ENCODE measurements at regions of chr9 and their contacts with region 1.

Region 1: GRCh38 chr9:95127249-95128176 is 190.0 kb downstream of the FANCC start:
- DNase-seq: peak; percentile 86
- H3K4me3 Mint-ChIP-seq: no peak overlapping the region
- H3K27ac Mint-ChIP-seq: no peak overlapping the region
- H3K4me1 Mint-ChIP-seq: peaks cover 2% of the 10 kb centered on the region
- H3K27me3 Mint-ChIP-seq: no peaks in the 10 kb centered on the region

Region 2: DNA sequence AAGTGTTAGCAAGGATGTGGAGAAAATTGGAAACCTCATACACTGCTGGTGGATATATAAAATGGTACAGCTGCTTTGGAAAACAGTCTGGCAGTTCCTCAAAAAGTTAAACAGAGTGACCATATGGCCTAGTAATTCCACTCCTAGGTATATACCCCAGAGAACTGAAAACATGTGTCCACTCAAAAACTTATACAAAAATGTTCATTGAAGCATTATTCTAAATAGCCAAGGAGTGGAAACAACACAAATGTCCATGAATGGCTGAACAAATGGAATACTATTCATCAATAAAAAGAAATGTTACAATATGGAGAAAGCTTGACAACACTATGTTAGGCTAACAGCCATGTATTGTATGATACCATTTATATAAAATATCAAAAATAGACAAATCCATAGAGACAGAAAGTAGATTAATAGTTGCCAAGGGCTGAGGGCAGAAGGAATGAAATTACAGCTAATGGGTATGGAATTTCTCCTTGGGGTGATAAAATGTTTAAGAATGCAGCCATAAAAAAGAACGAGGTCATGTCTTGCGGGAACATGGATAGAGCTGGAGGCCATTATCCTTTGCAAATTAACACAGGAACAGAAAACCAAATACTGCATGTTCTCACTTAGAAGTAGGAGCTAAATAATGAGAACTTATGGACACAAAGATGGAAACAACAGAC is 454.6 kb before region 1 on chr9:
- CTCF ChIA-PET with region 1: interaction called, 15 read pairs
- intact Hi-C with region 1: loop called (anchors 5 kb)
- DNase-seq: no peak
- H3K4me3 Mint-ChIP-seq: no peak overlapping the region
- H3K27ac Mint-ChIP-seq: no peak overlapping the region
- H3K4me1 Mint-ChIP-seq: peaks cover 3% of the 10 kb centered on the region
- H3K27me3 Mint-ChIP-seq: no peaks in the 10 kb centered on the region

Region 3: GRCh38 chr9:94783102-94783664 is 344.3 kb before region 1 on chr9:
- CTCF ChIA-PET with region 1: interaction called, 23 read pairs
- intact Hi-C with region 1: loop called (anchors 1 kb)
- DNase-seq: peak; percentile 66
- H3K4me3 Mint-ChIP-seq: no peak overlapping the region
- H3K27ac Mint-ChIP-seq: no peak overlapping the region
- H3K4me1 Mint-ChIP-seq: peaks cover 6% of the 10 kb centered on the region
- H3K27me3 Mint-ChIP-seq: no peaks in the 10 kb centered on the region

Region 4: DNA sequence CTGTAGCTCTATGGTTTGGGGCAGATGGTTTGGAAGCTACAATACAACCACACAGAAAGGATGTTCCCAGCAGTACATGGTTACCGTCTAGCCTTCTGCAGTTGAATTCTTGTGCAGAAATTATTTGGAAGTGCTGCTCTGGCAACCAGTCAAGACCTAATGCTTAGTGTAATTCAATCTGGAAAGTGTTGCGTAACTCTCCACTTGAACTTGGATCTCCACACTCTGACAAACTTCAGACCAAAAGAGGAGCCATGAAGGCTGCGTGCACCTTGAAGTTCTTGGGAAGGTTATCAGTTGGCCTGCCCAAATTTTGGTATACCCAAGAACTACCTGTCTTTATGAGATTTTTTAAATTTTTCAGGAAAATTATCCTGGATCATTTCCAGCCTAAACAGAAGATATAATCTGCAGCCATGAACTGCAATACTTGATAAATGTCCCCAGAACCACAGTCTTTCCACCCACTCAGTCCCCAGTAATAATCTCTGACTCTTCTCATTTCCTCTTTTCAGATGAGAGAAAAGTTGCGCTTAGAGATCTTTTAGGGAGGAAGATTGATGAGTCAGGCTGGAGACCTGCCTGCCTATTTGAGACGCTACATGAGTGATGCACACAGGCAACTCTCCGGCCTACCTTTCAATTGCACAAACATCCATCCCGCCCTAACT is 30.1 kb after region 1 on chr9:
- CTCF ChIA-PET with region 1: no interaction called
- intact Hi-C with region 1: no loop called
- DNase-seq: no peak
- H3K4me3 Mint-ChIP-seq: no peak overlapping the region
- H3K27ac Mint-ChIP-seq: no peak overlapping the region
- H3K4me1 Mint-ChIP-seq: peaks cover 5% of the 10 kb centered on the region
- H3K27me3 Mint-ChIP-seq: no peaks in the 10 kb centered on the region

Region 5: DNA sequence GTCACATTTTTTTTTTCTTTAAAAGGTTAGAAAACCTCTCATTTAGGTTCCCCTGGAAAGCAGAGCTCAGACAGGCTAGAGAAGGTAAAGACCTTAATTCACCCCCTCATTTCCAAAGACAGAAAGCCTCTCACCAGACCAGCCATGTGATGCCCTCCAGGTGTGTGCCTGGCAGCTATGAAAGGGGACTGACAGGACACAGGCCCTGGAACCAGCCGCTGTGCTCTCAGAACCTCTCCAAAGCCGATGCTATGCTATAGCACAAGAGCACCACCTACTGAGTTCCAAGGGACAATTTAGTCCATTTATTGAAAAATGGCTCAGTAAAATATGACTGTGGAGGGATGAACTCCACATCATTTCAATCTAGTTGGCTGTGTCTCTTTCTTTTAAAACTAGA is 141.2 kb after region 1 on chr9:
- CTCF ChIA-PET with region 1: interaction called, 4 read pairs
- intact Hi-C with region 1: loop called (anchors 5 kb)
- DNase-seq: peak; percentile 9
- H3K4me3 Mint-ChIP-seq: no peak overlapping the region
- H3K27ac Mint-ChIP-seq: no peak overlapping the region
- H3K4me1 Mint-ChIP-seq: peaks cover 18% of the 10 kb centered on the region
- H3K27me3 Mint-ChIP-seq: no peaks in the 10 kb centered on the region